ENCODE measurements at regions of chr6 and their contacts with region 1.

Region 1: DNA sequence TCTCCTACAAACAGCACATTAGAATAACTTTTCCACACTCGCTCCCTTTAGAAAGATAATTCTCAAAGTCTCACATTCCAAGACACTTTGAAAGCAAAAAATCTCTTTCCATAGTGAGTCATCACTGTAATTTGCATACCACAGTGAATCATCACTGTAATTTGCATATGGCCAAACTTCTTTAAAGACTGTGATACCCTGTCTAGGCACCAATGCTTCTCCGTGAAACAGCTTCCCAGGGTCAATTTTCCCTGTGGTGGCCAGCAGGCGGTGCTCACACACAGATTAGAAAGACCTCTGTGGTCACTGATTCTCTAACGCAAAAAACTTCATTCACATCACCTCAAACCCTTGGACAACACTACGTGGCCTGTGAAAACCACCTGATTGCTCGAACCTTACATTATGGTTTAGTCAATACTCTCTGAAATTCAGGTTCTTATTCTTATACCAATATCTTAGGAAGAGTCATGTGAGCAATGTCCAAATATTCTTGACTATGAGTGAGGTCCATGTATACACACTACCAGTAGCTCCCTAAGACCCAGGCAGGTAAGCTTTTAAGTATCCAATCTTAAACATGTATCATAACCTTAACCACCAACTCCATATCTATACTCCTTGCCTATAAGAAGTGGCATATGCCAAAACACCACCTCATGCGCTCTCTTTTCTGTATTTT is 78.5 kb upstream of the PHACTR1 start:
- DNase-seq: no peak
- H3K4me3 ChIP-seq: no peak overlapping the region
- H3K27ac ChIP-seq: no peak overlapping the region
- H3K4me1 ChIP-seq: no peaks in the 10 kb centered on the region
- H3K27me3 ChIP-seq: no peaks in the 10 kb centered on the region
- CTCF ChIP-seq: peak in 3 of 4 experiments; percentile 28 to 49 (median 32)
- EP300 ChIP-seq: no peak
- POLR2A ChIP-seq: no peak

Region 2: DNA sequence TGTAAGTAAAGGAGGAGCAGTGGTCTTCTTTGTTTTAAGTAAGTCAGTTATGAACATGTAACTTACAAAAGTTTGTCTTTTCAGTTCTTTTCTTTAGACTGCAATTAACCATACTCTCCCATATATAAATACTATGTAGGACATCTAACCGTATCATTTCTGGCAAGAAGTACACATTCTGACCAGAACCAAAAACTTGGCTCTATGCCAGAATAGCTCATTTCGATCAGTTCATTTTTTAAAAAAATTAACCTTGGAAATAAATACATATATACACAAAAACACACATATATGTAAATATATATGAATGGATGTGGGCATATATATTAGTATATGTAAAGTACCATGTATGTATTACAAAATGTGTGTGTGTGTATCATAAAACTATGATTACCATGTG is 223.5 kb after region 1 on chr6:
- intact Hi-C with region 1: no loop called
- DNase-seq: no peak
- H3K4me3 ChIP-seq: no peak overlapping the region
- H3K27ac ChIP-seq: no peak overlapping the region
- H3K4me1 ChIP-seq: no peaks in the 10 kb centered on the region
- H3K27me3 ChIP-seq: no peaks in the 10 kb centered on the region
- CTCF ChIP-seq: no peak
- EP300 ChIP-seq: no peak
- POLR2A ChIP-seq: no peak

Region 3: DNA sequence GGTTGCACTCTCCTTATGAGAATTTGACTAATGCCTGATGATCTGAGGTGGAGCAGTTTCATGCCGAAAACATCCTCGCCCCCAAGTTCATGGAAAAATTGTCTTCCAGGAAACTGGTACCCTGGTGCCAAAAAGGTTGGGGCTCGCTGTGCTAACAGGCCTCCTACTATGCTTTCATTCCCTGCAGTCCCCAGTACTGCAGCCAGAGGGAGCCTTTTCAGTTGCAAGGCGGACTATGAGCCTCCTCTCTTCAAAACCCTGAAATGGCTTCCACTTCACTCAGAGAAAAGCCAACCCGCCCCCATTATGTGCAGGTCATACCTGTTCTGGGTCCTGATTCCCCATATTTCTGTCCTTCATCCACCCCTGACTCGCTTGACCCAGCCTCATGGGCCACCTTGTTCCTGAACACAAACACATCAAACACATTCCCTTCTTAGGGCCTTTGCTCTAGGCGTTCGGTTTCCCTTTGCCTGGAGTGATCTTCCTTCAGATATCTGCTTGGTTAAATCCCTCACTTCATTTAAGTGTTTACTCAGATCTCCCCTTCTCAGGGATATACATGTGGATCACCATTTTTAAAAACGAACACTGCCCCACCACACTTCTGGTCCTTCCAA is 252.2 kb after region 1 on chr6:
- intact Hi-C with region 1: loop called (anchors 5 kb)
- DNase-seq: no peak
- H3K4me3 ChIP-seq: no peak overlapping the region
- H3K27ac ChIP-seq: no peak overlapping the region
- H3K4me1 ChIP-seq: peaks cover 0 to 6% (median 3%) of the 10 kb centered on the region in 4 donors
- H3K27me3 ChIP-seq: no peaks in the 10 kb centered on the region
- CTCF ChIP-seq: no peak
- EP300 ChIP-seq: no peak
- POLR2A ChIP-seq: no peak

Region 4: DNA sequence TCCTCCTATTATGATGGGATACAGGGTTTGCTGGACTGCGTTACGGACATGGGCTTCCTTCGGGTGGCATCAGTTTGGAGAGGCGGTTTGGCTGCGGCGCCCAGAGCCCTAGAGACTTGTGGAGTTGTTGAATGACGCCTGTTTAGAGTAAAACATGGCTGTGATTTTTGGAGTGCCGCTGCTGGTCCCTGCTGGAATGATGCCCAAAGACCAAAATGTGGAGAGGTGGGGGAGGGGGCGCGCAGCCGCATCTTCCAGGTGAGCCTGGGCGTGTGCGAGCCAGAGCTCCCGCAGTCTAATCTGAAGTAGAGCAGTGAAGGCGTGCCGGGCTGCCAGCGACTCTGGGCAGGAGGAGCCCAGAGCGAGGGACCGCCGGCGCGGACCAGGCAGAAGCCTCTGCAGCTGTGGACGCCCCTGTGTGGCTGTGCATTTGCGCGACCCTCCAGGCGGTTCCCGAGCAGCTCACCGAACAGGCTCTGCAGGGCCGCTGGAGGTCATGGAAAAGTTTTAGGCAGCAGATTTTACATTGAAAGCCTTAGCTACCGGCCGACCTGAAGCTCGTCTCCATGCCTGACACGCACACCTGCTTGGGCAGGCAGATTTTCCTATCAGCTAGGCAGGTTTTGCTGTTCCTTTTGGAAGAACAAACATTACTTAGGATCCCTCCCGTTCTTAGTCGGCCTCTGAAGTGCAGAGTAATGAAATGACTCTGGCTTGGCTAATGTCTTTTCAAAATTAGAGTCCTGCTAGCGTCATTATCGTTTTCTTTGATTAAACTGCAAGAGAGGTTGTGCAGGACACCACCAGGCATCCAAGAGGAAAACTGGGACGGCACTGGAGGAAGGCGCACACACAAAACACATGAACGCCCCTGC is 376.6 kb after region 1 on chr6:
- intact Hi-C with region 1: no loop called
- DNase-seq: no peak
- H3K4me3 ChIP-seq: peak overlapping the region in 3 of 4 donors; percentile 45 to 50 (median 48)
- H3K27ac ChIP-seq: no peak overlapping the region
- H3K4me1 ChIP-seq: peaks cover 0 to 24% (median 22%) of the 10 kb centered on the region in 4 donors
- H3K27me3 ChIP-seq: peaks cover 0 to 61% (median 31%) of the 10 kb centered on the region in 3 donors
- CTCF ChIP-seq: no peak
- EP300 ChIP-seq: no peak
- POLR2A ChIP-seq: no peak